ENCODE measurements at regions of chr17 and their contacts with region 1.

Region 1: DNA sequence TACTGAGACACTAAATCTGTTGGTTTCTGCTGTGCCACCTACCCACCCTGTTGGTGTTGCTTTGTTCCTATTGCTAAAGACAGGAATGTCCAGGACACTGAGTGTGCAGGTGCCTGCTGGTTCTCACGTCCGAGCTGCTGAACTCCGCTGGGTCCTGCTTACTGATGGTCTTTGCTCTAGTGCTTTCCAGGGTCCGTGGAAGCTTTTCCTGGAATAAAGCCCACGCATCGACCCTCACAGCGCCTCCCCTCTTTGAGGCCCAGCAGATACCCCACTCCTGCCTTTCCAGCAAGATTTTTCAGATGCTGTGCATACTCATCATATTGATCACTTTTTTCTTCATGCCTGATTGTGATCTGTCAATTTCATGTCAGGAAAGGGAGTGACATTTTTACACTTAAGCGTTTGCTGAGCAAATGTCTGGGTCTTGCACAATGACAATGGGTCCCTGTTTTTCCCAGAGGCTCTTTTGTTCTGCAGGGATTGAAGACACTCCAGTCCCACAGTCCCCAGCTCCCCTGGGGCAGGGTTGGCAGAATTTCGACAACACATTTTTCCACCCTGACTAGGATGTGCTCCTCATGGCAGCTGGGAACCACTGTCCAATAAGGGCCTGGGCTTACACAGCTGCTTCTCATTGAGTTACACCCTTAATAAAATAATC is 14.6 kb downstream of the STH start:
- DNase-seq: no peak
- ATAC-seq: no peak
- H3K4me3 ChIP-seq: no peak overlapping the region
- H3K27ac ChIP-seq: no peak overlapping the region
- H3K4me1 ChIP-seq: peaks cover 8% of the 10 kb centered on the region; the same call in 2 of the 3 replicates
- CTCF ChIP-seq: no peak
- EP300 ChIP-seq: no peak
- POLR2A ChIP-seq: no peak
- RAD21 ChIP-seq: no peak

Region 2: GRCh38 chr17:46026166-46027047 is 12.8 kb after region 1 on chr17:
- CTCF ChIA-PET with region 1: interaction called, 28 read pairs
- POLR2A ChIA-PET with region 1: no interaction called
- DNase-seq: no peak
- ATAC-seq: peak; percentile 14 to 21; a peak in 3 of 6 replicates
- H3K4me3 ChIP-seq: no peak overlapping the region
- H3K27ac ChIP-seq: no peak overlapping the region
- H3K4me1 ChIP-seq: no peaks in the 10 kb centered on the region
- CTCF ChIP-seq: no peak
- EP300 ChIP-seq: no peak
- POLR2A ChIP-seq: no peak
- RAD21 ChIP-seq: no peak

Region 3: DNA sequence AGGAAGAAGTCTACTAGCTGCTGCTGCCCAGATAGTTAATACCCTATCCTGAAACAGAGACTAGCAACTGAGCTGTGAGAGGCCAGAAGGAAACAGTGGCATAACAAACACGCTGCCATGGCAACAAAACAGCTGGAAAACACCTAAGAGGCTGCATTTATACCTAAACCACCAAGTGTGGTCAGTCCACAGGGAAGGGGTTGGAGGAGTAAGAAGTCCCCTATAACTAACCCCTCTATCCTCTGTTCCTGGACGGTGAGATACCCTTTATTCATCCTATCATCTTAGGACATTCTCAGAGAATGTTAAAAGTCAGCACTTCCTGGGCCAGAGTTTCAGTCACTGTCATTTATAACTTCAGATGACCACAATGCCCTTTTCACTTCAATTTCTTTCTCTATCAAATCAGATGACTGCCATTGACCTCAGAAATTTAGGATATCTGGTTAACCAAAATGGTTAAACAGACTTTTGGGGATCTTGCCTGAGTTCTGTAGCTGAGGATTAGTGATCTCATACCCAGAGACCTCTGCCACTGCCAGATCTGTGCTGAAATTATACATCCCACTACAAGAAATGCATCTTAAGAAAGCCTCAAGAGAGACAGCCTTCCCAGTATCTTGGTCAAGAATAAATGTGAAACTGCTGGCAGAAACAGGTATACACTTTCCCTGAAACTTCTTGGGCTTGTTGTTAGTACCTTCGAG is 21.6 kb after region 1 on chr17:
- CTCF ChIA-PET with region 1: interaction called, 11 read pairs
- POLR2A ChIA-PET with region 1: no interaction called
- DNase-seq: no peak
- ATAC-seq: no peak; a peak in 1 of 6 replicates
- H3K4me3 ChIP-seq: no peak overlapping the region
- H3K27ac ChIP-seq: no peak overlapping the region
- H3K4me1 ChIP-seq: no peaks in the 10 kb centered on the region
- CTCF ChIP-seq: no peak
- EP300 ChIP-seq: no peak
- POLR2A ChIP-seq: no peak
- RAD21 ChIP-seq: no peak

Region 4: DNA sequence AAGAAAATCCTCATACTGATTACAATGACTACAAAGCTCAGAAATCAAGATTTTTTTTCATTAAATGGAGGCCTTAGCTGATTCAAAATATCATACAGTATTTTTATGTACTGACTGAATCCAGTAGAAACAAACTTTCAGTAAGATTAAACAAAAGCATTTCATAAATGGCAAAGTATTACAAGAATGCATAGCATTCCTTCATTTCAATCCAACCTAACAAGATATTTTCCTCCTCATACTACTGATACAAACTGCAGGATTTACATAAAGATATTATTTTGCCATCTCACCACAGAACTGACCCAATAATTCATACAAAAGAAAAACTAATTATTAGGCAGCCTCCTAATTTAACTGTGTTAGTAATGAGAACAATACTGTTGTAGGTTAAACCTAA is 185.7 kb after region 1 on chr17:
- CTCF ChIA-PET with region 1: interaction called, 10 read pairs
- POLR2A ChIA-PET with region 1: no interaction called
- DNase-seq: no peak
- ATAC-seq: no peak
- H3K4me3 ChIP-seq: no peak overlapping the region
- H3K27ac ChIP-seq: no peak overlapping the region
- H3K4me1 ChIP-seq: peaks cover 54% of the 10 kb centered on the region
- CTCF ChIP-seq: no peak
- EP300 ChIP-seq: no peak
- POLR2A ChIP-seq: no peak
- RAD21 ChIP-seq: no peak